A673 (cell line): ENCODE measurements at regions of chr2 and their contacts with region 1.

Region 1: GRCh38 chr2:165933211-165933610 is 20.4 kb downstream of the TTC21B start:
- DNase-seq: no peak
- H3K4me3 ChIP-seq: no peak overlapping the region
- H3K27ac ChIP-seq: no peak overlapping the region
- H3K4me1 ChIP-seq: no peaks in the 10 kb centered on the region
- H3K27me3 ChIP-seq: no peaks in the 10 kb centered on the region
- CTCF ChIP-seq: no peak

Region 2: GRCh38 chr2:165889798-165890197 is 43.4 kb before region 1 on chr2:
- CTCF ChIA-PET with region 1: no interaction called
- POLR2A ChIA-PET with region 1: no interaction called
- intact Hi-C with region 1: loop called (anchors 5 kb)
- DNase-seq: no peak
- H3K4me3 ChIP-seq: no peak overlapping the region
- H3K27ac ChIP-seq: no peak overlapping the region
- H3K4me1 ChIP-seq: peaks cover 20% of the 10 kb centered on the region
- H3K27me3 ChIP-seq: no peaks in the 10 kb centered on the region
- CTCF ChIP-seq: no peak

Region 3: DNA sequence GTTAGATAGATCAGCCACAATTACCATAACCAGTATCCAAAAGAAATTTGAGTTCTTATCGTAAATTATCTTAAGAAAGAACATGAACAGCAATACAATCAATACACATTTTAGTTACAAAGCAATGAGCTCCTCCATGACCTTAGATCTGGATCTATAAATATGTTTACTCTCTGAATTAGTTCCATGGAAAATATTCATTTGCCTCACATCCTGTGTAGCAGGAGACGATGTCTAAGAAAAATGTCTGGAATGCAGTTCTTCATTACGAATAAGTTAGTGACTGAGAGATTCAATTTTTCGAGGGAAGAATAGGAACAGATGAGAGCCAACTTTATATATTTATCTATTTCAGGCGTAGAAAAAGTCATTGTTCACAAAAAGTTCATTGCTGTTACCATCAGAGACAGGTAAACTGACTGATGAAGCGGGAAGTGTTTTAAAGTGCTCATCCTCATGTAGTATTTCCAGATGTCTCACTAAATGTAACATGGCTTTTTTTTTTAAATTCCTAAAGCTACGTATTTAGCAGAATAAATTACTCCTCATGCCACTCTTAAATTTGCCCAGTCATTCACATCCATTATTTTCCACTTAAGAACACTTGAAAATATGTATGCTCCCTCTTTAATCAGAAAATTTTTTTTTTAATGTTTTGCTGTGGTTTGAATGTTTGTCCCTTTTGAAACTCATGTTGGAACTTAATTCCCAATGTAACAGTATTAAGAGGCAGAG is 301.1 kb after region 1 on chr2:
- CTCF ChIA-PET with region 1: no interaction called
- POLR2A ChIA-PET with region 1: no interaction called
- intact Hi-C with region 1: no loop called
- DNase-seq: peak; percentile 42
- H3K4me3 ChIP-seq: no peak overlapping the region
- H3K27ac ChIP-seq: no peak overlapping the region
- H3K4me1 ChIP-seq: no peaks in the 10 kb centered on the region
- H3K27me3 ChIP-seq: no peaks in the 10 kb centered on the region
- CTCF ChIP-seq: no peak